Natural killer cell (primary cell): ENCODE measurements at regions of chr2 and their contacts with region 1.

Region 1: GRCh38 chr2:181123798-181124231 is 143.4 kb downstream of the UBE2E3 start:
- DNase-seq: peak; percentile 39 to 91
- ATAC-seq: peak; percentile 89 to 98 (median 97)
- H3K4me3 ChIP-seq: no peak overlapping the region
- H3K4me3 Mint-ChIP-seq: peak overlapping the region; percentile 66
- H3K27ac ChIP-seq: peak overlapping the region; percentile 97
- H3K27ac Mint-ChIP-seq: peak overlapping the region; percentile 96 to 99
- H3K4me1 ChIP-seq: peaks cover 9% of the 10 kb centered on the region
- H3K4me1 Mint-ChIP-seq: peaks cover 61% of the 10 kb centered on the region in 2 donors
- H3K27me3 ChIP-seq: no peaks in the 10 kb centered on the region
- H3K27me3 Mint-ChIP-seq: no peaks in the 10 kb centered on the region
- CTCF ChIP-seq: no peak

Region 2: GRCh38 chr2:181140414-181140813 is 16.6 kb after region 1 on chr2:
- intact Hi-C with region 1: loop called (anchors 1 kb)
- DNase-seq: peak in 1 of 2 donors; percentile 69
- ATAC-seq: peak; percentile 45 to 58 (median 54)
- H3K4me3 ChIP-seq: no peak overlapping the region
- H3K4me3 Mint-ChIP-seq: peak overlapping the region; percentile 28
- H3K27ac ChIP-seq: no peak overlapping the region
- H3K27ac Mint-ChIP-seq: peak overlapping the region; percentile 91 to 92
- H3K4me1 ChIP-seq: peaks cover 24% of the 10 kb centered on the region
- H3K4me1 Mint-ChIP-seq: peaks cover 72 to 73% of the 10 kb centered on the region in 2 donors
- H3K27me3 ChIP-seq: no peaks in the 10 kb centered on the region
- H3K27me3 Mint-ChIP-seq: no peaks in the 10 kb centered on the region
- CTCF ChIP-seq: no peak

Region 3: GRCh38 chr2:181146171-181146570 is 22.4 kb after region 1 on chr2:
- intact Hi-C with region 1: loop called (anchors 1 kb)
- DNase-seq: peak in 1 of 2 donors; percentile 61
- ATAC-seq: peak; percentile 75 to 90 (median 83)
- H3K4me3 ChIP-seq: no peak overlapping the region
- H3K4me3 Mint-ChIP-seq: peak overlapping the region; percentile 75
- H3K27ac ChIP-seq: peak overlapping the region; percentile 78
- H3K27ac Mint-ChIP-seq: peak overlapping the region; percentile 89 to 90
- H3K4me1 ChIP-seq: peaks cover 29% of the 10 kb centered on the region
- H3K4me1 Mint-ChIP-seq: peaks cover 64 to 66% of the 10 kb centered on the region in 2 donors
- H3K27me3 ChIP-seq: no peaks in the 10 kb centered on the region
- H3K27me3 Mint-ChIP-seq: no peaks in the 10 kb centered on the region
- CTCF ChIP-seq: no peak

Region 4: GRCh38 chr2:181305301-181306123 is 181.7 kb after region 1 on chr2:
- intact Hi-C with region 1: loop called (anchors 5 kb)
- DNase-seq: peak in 1 of 2 donors; percentile 69
- ATAC-seq: peak; percentile 56 to 78 (median 69)
- H3K4me3 ChIP-seq: no peak overlapping the region
- H3K4me3 Mint-ChIP-seq: peak overlapping the region; percentile 82
- H3K27ac ChIP-seq: peak overlapping the region; percentile 85
- H3K27ac Mint-ChIP-seq: peak overlapping the region; percentile 94 to 97
- H3K4me1 ChIP-seq: peaks cover 26% of the 10 kb centered on the region
- H3K4me1 Mint-ChIP-seq: peaks cover 71 to 72% of the 10 kb centered on the region in 2 donors
- H3K27me3 ChIP-seq: no peaks in the 10 kb centered on the region
- H3K27me3 Mint-ChIP-seq: no peaks in the 10 kb centered on the region
- CTCF ChIP-seq: no peak

Region 5: DNA sequence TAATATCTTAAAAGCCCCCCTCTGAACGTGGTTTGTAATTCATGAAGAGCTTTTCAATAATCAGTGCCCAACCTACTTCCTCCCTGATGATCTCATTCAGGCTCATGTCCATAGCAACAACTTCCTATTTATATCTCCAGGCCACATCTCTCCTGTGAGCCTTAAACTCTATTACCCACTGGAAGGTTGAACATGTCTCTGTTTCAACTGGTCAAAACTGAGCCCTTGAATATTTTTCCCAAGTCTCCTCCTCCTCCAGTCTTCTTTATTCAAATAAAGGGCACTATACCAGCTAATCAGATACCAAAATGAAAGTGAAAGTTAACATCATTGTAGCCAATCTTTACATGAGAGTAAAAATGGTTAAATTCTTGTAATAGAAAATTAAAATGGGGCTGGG is 269.7 kb after region 1 on chr2:
- intact Hi-C with region 1: loop called (anchors 5 kb)
- DNase-seq: peak in 1 of 2 donors; percentile 66
- ATAC-seq: peak; percentile 57 to 79 (median 65)
- H3K4me3 ChIP-seq: peak overlapping the region; percentile 53
- H3K4me3 Mint-ChIP-seq: peak overlapping the region; percentile 95
- H3K27ac ChIP-seq: peak overlapping the region; percentile 99
- H3K27ac Mint-ChIP-seq: peak overlapping the region; percentile 92 to 98
- H3K4me1 ChIP-seq: peaks cover 8% of the 10 kb centered on the region
- H3K4me1 Mint-ChIP-seq: peaks cover 21 to 27% of the 10 kb centered on the region in 2 donors
- H3K27me3 ChIP-seq: no peaks in the 10 kb centered on the region
- H3K27me3 Mint-ChIP-seq: no peaks in the 10 kb centered on the region
- CTCF ChIP-seq: no peak

Region 6: DNA sequence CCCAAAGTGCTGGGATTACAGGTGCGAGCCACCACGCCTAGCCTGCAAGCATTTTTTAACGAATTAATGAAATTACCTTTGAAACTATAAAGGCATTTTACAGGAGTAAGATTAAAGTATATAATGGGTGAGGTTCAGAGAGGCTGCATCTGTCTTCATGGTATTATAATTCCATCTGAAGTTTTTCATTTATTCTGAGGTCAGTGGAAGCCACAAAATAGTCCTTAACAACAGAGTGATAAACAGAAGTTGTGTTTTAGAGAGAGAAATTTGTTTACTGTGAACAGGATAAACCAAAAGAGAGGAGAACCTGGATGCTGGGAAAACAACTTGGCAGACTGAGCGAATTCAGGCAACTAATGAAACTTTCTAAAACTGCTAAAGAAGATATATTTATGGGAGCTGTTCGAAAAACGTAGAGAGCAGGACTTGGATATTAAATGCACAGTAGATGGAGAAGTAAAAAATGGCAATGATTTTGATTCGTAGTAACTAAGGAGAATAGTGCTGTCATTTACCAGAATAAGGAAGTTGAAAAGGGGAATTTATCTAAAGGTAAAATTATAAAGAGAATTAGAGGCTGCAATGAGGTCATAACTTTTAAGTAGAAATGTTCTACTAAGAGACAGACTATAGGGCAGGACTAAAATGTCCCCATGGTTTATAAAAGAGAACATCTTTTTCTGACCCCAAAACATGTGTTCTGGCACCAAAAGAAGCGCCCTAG is 295.5 kb after region 1 on chr2:
- intact Hi-C with region 1: no loop called
- DNase-seq: no peak
- ATAC-seq: peak in 1 of 3 donors; percentile 41
- H3K4me3 ChIP-seq: no peak overlapping the region
- H3K4me3 Mint-ChIP-seq: no peak overlapping the region
- H3K27ac ChIP-seq: peak overlapping the region; percentile 53
- H3K27ac Mint-ChIP-seq: no peak overlapping the region
- H3K4me1 ChIP-seq: peaks cover 4% of the 10 kb centered on the region
- H3K4me1 Mint-ChIP-seq: peaks cover 8 to 9% of the 10 kb centered on the region in 2 donors
- H3K27me3 ChIP-seq: no peaks in the 10 kb centered on the region
- H3K27me3 Mint-ChIP-seq: no peaks in the 10 kb centered on the region
- CTCF ChIP-seq: no peak